ENCODE measurements at regions of chr5 and their contacts with region 1.

Region 1: GRCh38 chr5:178331399-178331996 is 98.9 kb upstream of the PHYKPL start:
- DNase-seq: peak; percentile 63 to 70
- ATAC-seq: peak; percentile 71 to 90 (median 86)
- H3K4me3 ChIP-seq: no peak overlapping the region
- H3K27ac ChIP-seq: peak overlapping the region; percentile 73 to 90 (median 84)
- H3K4me1 ChIP-seq: peaks cover 8 to 43% (median 23%) of the 10 kb centered on the region in 9 donors
- H3K27me3 ChIP-seq: no peaks in the 10 kb centered on the region
- CTCF ChIP-seq: no peak

Region 2: DNA sequence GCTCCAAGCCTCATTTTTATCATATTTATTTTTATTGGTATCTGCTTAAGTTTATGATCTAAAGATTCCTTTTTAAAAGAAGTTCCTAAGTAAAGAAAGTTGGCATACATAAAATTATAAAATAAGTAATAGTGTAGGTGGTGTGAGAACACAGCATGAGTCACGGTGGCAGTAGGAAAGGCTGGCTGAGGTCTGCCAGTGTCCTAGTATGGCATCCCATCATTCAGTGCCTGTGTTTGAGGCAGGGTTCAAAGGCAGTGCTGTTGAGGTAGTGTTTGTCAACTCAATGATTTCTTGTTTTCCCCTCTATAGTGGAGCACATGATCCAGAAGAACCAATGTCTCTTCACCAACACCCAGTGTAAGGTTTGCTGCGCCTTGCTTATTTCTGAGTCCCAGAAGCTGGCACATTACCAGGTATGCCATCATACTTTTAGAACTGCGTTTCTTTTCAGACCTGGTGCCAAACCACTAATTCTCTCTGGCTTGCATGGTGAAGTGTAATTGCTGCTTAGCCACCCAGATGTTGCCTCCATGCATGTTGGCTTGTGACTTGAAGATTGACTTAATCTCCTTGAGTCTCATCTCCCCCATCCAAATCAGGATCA is 1290.6 kb before region 1 on chr5:
- intact Hi-C with region 1: no loop called
- DNase-seq: peak in 1 of 2 donors; percentile 6
- ATAC-seq: peak in 1 of 8 donors; percentile 24
- H3K4me3 ChIP-seq: no peak overlapping the region
- H3K27ac ChIP-seq: no peak overlapping the region
- H3K4me1 ChIP-seq: peaks cover 0 to 29% (median 4%) of the 10 kb centered on the region in 9 donors
- H3K27me3 ChIP-seq: no peaks in the 10 kb centered on the region
- CTCF ChIP-seq: no peak

Region 3: DNA sequence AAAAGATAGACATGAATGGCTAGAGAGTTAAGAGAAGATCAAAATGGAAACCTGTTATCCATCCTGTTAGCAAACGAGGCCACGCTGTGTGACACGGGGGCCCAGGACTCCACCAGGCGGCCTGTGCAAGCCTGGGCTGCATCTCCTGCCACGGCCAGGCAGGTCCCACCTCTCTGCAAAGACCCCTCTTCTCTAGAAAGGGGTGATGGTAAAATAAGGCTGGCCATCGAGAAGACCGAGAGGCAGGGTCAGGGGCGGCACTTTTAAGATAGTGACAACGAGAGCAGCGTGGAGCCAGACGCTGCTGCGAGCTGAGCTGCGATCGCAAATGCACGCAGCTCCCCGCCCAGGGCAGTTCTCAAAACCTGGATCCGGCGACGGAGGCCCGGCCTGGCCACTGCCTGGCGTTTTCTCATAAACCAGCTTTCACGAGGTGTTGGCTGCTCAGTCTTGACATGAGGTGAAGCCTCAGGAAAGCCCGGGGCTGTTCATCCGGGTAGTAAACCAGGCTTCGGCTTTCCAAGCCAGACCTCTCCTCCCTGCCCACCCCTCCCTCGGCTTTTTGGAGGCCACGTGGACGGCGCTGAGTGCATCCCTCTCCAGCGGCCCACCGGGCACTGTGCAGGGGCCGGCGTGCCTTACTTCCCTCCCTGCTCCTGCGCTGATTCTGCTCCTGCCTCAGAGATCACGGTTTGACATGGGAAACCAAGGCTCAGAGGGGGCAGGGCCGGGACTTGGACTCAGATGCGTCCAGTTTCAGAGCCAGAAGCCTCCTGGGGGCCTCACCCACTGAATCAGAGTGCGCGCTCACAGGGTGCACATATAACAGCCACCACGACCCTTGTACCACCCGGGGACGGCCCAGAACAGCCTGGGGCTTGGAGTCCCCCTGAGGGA is 52.7 kb after region 1 on chr5:
- intact Hi-C with region 1: loop called in 1 of 10 experiments (anchors 5 kb)
- DNase-seq: peak in 1 of 2 donors; percentile 27
- ATAC-seq: peak in 7 of 8 donors; percentile 25 to 80 (median 54)
- H3K4me3 ChIP-seq: peak overlapping the region in 6 of 10 donors; percentile 10 to 27 (median 20)
- H3K27ac ChIP-seq: no peak overlapping the region
- H3K4me1 ChIP-seq: peaks cover 0 to 25% (median 7%) of the 10 kb centered on the region in 9 donors
- H3K27me3 ChIP-seq: peaks cover 0 to 60% (median 33%) of the 10 kb centered on the region in 7 donors
- CTCF ChIP-seq: no peak

Region 4: GRCh38 chr5:178428341-178428964 is 97.0 kb after region 1 on chr5:
- intact Hi-C with region 1: loop called in 1 of 10 experiments (anchors 5 kb)
- DNase-seq: peak; percentile 58 to 76
- ATAC-seq: peak; percentile 80 to 97 (median 92)
- H3K4me3 ChIP-seq: no peak overlapping the region
- H3K27ac ChIP-seq: peak overlapping the region; percentile 66 to 90 (median 82)
- H3K4me1 ChIP-seq: peaks cover 0 to 23% (median 13%) of the 10 kb centered on the region in 9 donors
- H3K27me3 ChIP-seq: no peaks in the 10 kb centered on the region
- CTCF ChIP-seq: no peak

Region 5: GRCh38 chr5:178542455-178542854 is 211.0 kb after region 1 on chr5:
- intact Hi-C with region 1: loop called in 2 of 10 experiments (anchors 5 kb)
- DNase-seq: peak in 1 of 2 donors; percentile 67
- ATAC-seq: peak; percentile 7 to 60 (median 34)
- H3K4me3 ChIP-seq: no peak overlapping the region
- H3K27ac ChIP-seq: peak overlapping the region; percentile 53 to 94 (median 80)
- H3K4me1 ChIP-seq: peaks cover 5 to 49% (median 34%) of the 10 kb centered on the region in 9 donors
- H3K27me3 ChIP-seq: no peaks in the 10 kb centered on the region
- CTCF ChIP-seq: no peak

Region 6: DNA sequence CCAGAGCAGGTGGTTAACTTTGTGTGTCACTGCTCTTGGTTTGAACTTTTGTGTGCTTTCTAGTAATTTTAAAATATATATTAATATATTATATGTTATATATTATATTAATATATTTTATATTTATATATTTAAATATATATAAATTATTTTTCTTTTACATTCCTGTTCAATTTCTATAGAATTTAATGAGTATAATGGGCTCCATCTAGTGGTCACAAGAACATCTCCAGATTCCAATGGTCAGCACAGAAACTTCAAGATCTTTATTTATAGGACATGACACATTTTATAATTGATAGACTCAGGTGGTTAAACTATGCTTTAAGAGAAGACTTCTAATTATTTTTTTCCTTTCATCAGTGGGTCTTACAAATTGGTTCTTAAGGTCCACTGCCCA is 219.6 kb after region 1 on chr5:
- intact Hi-C with region 1: loop called in 1 of 10 experiments (anchors 5 kb)
- DNase-seq: no peak
- ATAC-seq: no peak
- H3K4me3 ChIP-seq: no peak overlapping the region
- H3K27ac ChIP-seq: no peak overlapping the region
- H3K4me1 ChIP-seq: peaks cover 4 to 21% (median 11%) of the 10 kb centered on the region in 9 donors
- H3K27me3 ChIP-seq: peaks cover 0 to 9% (median 0%) of the 10 kb centered on the region in 7 donors
- CTCF ChIP-seq: peak in 8 of 9 donors; percentile 27 to 74 (median 60)